ENCODE measurements at regions of chr19 and their contacts with region 1.

Region 1: DNA sequence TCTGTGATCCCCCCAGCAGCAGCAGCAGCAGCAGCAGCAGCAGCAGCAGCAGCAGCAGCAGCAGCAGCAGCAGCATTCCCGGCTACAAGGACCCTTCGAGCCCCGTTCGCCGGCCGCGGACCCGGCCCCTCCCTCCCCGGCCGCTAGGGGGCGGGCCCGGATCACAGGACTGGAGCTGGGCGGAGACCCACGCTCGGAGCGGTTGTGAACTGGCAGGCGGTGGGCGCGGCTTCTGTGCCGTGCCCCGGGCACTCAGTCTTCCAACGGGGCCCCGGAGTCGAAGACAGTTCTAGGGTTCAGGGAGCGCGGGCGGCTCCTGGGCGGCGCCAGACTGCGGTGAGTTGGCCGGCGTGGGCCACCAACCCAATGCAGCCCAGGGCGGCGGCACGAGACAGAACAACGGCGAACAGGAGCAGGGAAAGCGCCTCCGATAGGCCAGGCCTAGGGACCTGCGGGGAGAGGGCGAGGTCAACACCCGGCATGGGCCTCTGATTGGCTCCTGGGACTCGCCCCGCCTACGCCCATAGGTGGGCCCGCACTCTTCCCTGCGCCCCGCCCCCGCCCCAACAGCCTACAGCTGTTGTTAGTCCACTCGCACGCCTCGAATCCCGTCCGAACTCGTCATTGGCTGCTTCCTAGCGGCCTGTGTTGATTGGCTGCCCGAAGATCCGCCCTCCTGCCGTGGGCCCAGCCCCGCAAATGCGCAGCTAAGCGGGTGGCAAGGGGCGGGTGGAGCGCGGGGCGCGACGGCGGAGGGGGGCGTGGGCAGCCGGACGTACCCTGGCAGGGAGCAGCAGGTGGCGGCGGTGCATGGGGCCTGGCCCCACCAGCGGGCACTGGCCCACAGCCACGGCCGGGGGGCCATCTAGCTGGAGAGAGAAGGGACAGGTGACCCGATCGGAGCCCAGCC is 1.4 kb upstream of the SIX5 start:
- DNase-seq: peak; percentile 96
- H3K4me3 Mint-ChIP-seq: peak overlapping the region; percentile 84
- H3K27ac Mint-ChIP-seq: peak overlapping the region; percentile 88
- H3K4me1 Mint-ChIP-seq: peaks cover 21% of the 10 kb centered on the region
- H3K27me3 Mint-ChIP-seq: no peaks in the 10 kb centered on the region
- CTCF ChIP-seq: peak; percentile 99

Region 2: DNA sequence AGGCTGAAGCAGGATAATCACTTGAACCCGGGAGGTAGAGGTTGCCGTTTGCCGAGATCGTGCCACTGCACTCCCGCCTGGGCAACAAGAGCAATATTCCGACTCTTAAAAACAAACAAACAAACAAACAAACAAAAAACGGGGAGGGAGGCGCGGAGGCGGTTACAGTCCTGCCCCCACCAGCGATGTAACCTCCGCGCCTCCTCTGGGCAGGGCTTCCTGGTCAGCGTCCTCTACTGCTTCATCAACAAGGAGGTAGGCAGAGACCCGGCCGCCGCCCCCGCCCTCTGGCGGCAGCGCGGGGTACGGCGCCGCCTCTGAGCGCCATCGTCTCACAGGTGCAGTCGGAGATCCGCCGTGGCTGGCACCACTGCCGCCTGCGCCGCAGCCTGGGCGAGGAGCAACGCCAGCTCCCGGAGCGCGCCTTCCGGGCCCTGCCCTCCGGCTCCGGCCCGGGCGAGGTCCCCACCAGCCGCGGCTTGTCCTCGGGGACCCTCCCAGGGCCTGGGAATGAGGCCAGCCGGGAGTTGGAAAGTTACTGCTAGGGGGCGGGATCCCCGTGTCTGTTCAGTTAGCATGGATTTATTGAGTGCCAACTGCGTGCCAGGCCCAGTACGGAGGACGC is 88.9 kb before region 1 on chr19:
- CTCF ChIA-PET with region 1: interaction called, 16 read pairs
- intact Hi-C with region 1: no loop called
- DNase-seq: peak; percentile 96
- H3K4me3 Mint-ChIP-seq: peak overlapping the region; percentile 73
- H3K27ac Mint-ChIP-seq: peak overlapping the region; percentile 11
- H3K4me1 Mint-ChIP-seq: peaks cover 8% of the 10 kb centered on the region
- H3K27me3 Mint-ChIP-seq: no peaks in the 10 kb centered on the region
- CTCF ChIP-seq: peak; percentile 99

Region 3: DNA sequence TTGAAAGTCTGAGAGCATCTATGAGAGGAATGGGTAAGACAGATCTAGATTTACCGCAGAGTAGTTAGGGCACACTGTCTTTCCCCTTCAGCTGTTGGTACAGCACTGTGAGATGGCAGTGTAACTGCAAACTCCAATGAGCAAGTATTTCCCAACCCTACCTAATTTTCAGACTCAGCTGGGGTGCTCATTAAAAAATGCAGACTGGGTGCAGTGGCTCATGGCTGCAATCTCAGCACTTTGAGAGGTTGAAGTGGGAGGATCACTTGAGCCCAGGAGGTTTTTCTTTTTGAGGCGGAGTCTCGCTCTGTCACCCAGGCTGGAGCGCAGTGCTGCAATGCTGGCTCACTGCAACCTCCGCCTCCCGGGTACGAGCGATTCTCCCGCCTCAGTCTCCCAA is 65.3 kb before region 1 on chr19:
- CTCF ChIA-PET with region 1: no interaction called
- intact Hi-C with region 1: no loop called
- DNase-seq: no peak
- H3K4me3 Mint-ChIP-seq: no peak overlapping the region
- H3K27ac Mint-ChIP-seq: no peak overlapping the region
- H3K4me1 Mint-ChIP-seq: no peaks in the 10 kb centered on the region
- H3K27me3 Mint-ChIP-seq: no peaks in the 10 kb centered on the region
- CTCF ChIP-seq: no peak

Region 4: GRCh38 chr19:45717166-45717982 is 53.1 kb before region 1 on chr19:
- CTCF ChIA-PET with region 1: interaction called, 18 read pairs
- intact Hi-C with region 1: loop called (anchors 5 kb)
- DNase-seq: peak; percentile 99
- H3K4me3 Mint-ChIP-seq: peak overlapping the region; percentile 90
- H3K27ac Mint-ChIP-seq: peak overlapping the region; percentile 96
- H3K4me1 Mint-ChIP-seq: peaks cover 26% of the 10 kb centered on the region
- H3K27me3 Mint-ChIP-seq: no peaks in the 10 kb centered on the region
- CTCF ChIP-seq: no peak

Region 5: GRCh38 chr19:45782820-45783785 is 12.7 kb after region 1 on chr19:
- CTCF ChIA-PET with region 1: interaction called, 17 read pairs
- intact Hi-C with region 1: no loop called
- DNase-seq: no peak
- H3K4me3 Mint-ChIP-seq: no peak overlapping the region
- H3K27ac Mint-ChIP-seq: peak overlapping the region; percentile 12
- H3K4me1 Mint-ChIP-seq: peaks cover 17% of the 10 kb centered on the region
- H3K27me3 Mint-ChIP-seq: no peaks in the 10 kb centered on the region
- CTCF ChIP-seq: no peak

Region 6: DNA sequence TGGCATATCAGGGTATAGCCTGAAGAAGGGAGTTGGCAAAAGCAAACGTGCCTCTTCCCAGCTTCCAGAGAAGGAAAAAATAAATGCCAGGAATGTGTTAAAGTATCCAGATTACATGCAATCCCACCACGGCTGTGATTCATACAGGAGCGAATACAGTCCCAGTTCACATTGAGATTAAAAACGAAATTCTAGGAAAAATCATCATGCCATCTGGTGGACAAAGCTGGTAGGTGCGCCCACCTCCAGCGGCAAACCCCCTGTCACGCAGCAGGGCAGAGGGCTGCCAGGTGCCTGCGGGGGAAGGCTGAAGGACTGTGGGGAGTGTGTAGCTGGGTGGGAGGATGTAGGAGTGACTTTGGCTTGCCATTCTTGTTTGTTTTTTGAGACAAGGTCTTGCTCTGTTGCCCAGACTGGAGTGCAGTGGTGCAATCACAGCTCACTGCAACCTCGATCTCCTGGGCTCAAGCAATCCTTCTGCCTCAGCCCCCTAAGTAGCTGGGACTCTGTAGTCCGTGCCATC is 28.6 kb after region 1 on chr19:
- CTCF ChIA-PET with region 1: interaction called, 43 read pairs
- intact Hi-C with region 1: loop called (anchors 2 kb)
- DNase-seq: peak; percentile 77
- H3K4me3 Mint-ChIP-seq: no peak overlapping the region
- H3K27ac Mint-ChIP-seq: no peak overlapping the region
- H3K4me1 Mint-ChIP-seq: peaks cover 9% of the 10 kb centered on the region
- H3K27me3 Mint-ChIP-seq: peaks cover 22% of the 10 kb centered on the region
- CTCF ChIP-seq: peak; percentile 83

Measured in Calu3 (cell line).